CD4-positive, alpha-beta memory T cell (primary cell): ENCODE measurements at regions of chr13 and their contacts with region 1.

Region 1: DNA sequence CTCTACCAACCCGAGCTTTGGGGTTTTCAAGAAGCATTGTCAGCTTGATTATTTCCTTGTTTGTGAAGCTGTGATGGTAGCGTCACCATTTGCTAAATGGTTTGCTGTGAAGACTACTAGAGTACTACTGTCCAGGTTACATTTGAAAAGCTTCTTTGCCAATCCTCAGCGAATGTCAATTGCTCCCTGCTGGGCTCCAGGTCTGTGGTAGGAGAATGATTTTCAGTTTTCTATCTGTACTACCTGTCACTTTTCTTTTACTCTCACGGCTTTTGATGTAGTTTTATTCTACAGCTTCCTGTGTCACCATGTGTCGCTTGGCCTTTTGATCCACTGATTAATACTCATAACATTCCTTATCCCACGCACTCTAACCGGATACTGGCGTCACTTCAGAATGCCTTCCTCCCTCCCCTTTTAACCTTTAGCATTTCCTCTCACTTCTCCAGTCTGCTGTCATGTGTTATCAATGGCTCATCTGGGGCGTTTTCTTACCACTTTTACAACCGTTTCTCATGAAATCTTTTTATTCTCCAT is 7.5 kb upstream of the GPR183 start:
- DNase-seq: peak; percentile 77 to 86 (median 83)
- H3K4me3 ChIP-seq: peak overlapping the region; percentile 26 to 46
- H3K4me3 Mint-ChIP-seq: peak overlapping the region; percentile 76 to 88 (median 80)
- H3K27ac ChIP-seq: peak overlapping the region; percentile 73
- H3K27ac Mint-ChIP-seq: peak overlapping the region; percentile 88 to 99 (median 98)
- H3K4me1 ChIP-seq: peaks cover 87% of the 10 kb centered on the region
- H3K4me1 Mint-ChIP-seq: peaks cover 61 to 86% (median 74%) of the 10 kb centered on the region in 4 donors
- H3K27me3 ChIP-seq: no peaks in the 10 kb centered on the region
- H3K27me3 Mint-ChIP-seq: no peaks in the 10 kb centered on the region

Region 2: GRCh38 chr13:99133230-99133629 is 181.5 kb before region 1 on chr13:
- CTCF ChIA-PET with region 1: no interaction called
- POLR2A ChIA-PET with region 1: no interaction called
- intact Hi-C with region 1: no loop called
- DNase-seq: no peak
- H3K4me3 ChIP-seq: no peak overlapping the region
- H3K4me3 Mint-ChIP-seq: no peak overlapping the region
- H3K27ac ChIP-seq: no peak overlapping the region
- H3K27ac Mint-ChIP-seq: peak overlapping the region in 2 of 7 donors; percentile 13 to 25
- H3K4me1 ChIP-seq: no peaks in the 10 kb centered on the region
- H3K4me1 Mint-ChIP-seq: peaks cover 0 to 3% (median 0%) of the 10 kb centered on the region in 4 donors
- H3K27me3 ChIP-seq: no peaks in the 10 kb centered on the region
- H3K27me3 Mint-ChIP-seq: no peaks in the 10 kb centered on the region

Region 3: GRCh38 chr13:99288089-99288488 is 26.6 kb before region 1 on chr13:
- CTCF ChIA-PET with region 1: no interaction called
- POLR2A ChIA-PET with region 1: interaction called, 406 read pairs
- intact Hi-C with region 1: no loop called
- DNase-seq: no peak
- H3K4me3 ChIP-seq: no peak overlapping the region
- H3K4me3 Mint-ChIP-seq: peak overlapping the region; percentile 33 to 84 (median 60)
- H3K27ac ChIP-seq: peak overlapping the region; percentile 18
- H3K27ac Mint-ChIP-seq: peak overlapping the region; percentile 88 to 95 (median 89)
- H3K4me1 ChIP-seq: peaks cover 95% of the 10 kb centered on the region
- H3K4me1 Mint-ChIP-seq: peaks cover 65 to 100% (median 81%) of the 10 kb centered on the region in 4 donors
- H3K27me3 ChIP-seq: no peaks in the 10 kb centered on the region
- H3K27me3 Mint-ChIP-seq: no peaks in the 10 kb centered on the region

Region 4: GRCh38 chr13:99296398-99296797 is 18.3 kb before region 1 on chr13:
- CTCF ChIA-PET with region 1: interaction called, 6 read pairs
- POLR2A ChIA-PET with region 1: interaction called, 247 read pairs
- intact Hi-C with region 1: loop called (anchors 2 kb)
- DNase-seq: peak; percentile 46 to 69 (median 59)
- H3K4me3 ChIP-seq: peak overlapping the region in 1 of 2 donors; percentile 8
- H3K4me3 Mint-ChIP-seq: peak overlapping the region; percentile 76 to 87 (median 86)
- H3K27ac ChIP-seq: peak overlapping the region; percentile 66
- H3K27ac Mint-ChIP-seq: peak overlapping the region; percentile 86 to 96 (median 94)
- H3K4me1 ChIP-seq: peaks cover 94% of the 10 kb centered on the region
- H3K4me1 Mint-ChIP-seq: peaks cover 58 to 92% (median 70%) of the 10 kb centered on the region in 4 donors
- H3K27me3 ChIP-seq: no peaks in the 10 kb centered on the region
- H3K27me3 Mint-ChIP-seq: no peaks in the 10 kb centered on the region

Region 5: GRCh38 chr13:99301913-99302636 is 12.6 kb before region 1 on chr13:
- CTCF ChIA-PET with region 1: interaction called, 6 read pairs
- POLR2A ChIA-PET with region 1: interaction called, 247 read pairs
- intact Hi-C with region 1: loop called (anchors 1 kb)
- DNase-seq: no peak
- H3K4me3 ChIP-seq: peak overlapping the region; percentile 78 to 80
- H3K4me3 Mint-ChIP-seq: peak overlapping the region; percentile 88 to 100 (median 99)
- H3K27ac ChIP-seq: peak overlapping the region; percentile 77
- H3K27ac Mint-ChIP-seq: peak overlapping the region; percentile 88 to 99 (median 96)
- H3K4me1 ChIP-seq: peaks cover 74% of the 10 kb centered on the region
- H3K4me1 Mint-ChIP-seq: peaks cover 45 to 77% (median 55%) of the 10 kb centered on the region in 4 donors
- H3K27me3 ChIP-seq: no peaks in the 10 kb centered on the region
- H3K27me3 Mint-ChIP-seq: no peaks in the 10 kb centered on the region

Region 6: GRCh38 chr13:99347911-99348451 is 33.3 kb after region 1 on chr13:
- CTCF ChIA-PET with region 1: interaction called, 10 read pairs
- POLR2A ChIA-PET with region 1: interaction called, 929 read pairs
- intact Hi-C with region 1: no loop called
- DNase-seq: no peak
- H3K4me3 ChIP-seq: no peak overlapping the region
- H3K4me3 Mint-ChIP-seq: peak overlapping the region in 5 of 8 donors; percentile 30 to 66 (median 56)
- H3K27ac ChIP-seq: peak overlapping the region; percentile 9
- H3K27ac Mint-ChIP-seq: peak overlapping the region; percentile 79 to 99 (median 94)
- H3K4me1 ChIP-seq: peaks cover 84% of the 10 kb centered on the region
- H3K4me1 Mint-ChIP-seq: peaks cover 79 to 98% (median 88%) of the 10 kb centered on the region in 4 donors
- H3K27me3 ChIP-seq: no peaks in the 10 kb centered on the region
- H3K27me3 Mint-ChIP-seq: no peaks in the 10 kb centered on the region

Region 7: GRCh38 chr13:99366075-99366987 is 51.6 kb after region 1 on chr13:
- CTCF ChIA-PET with region 1: interaction called, 6 read pairs
- POLR2A ChIA-PET with region 1: interaction called, 417 read pairs
- intact Hi-C with region 1: no loop called
- DNase-seq: no peak
- H3K4me3 ChIP-seq: peak overlapping the region in 1 of 2 donors; percentile 22
- H3K4me3 Mint-ChIP-seq: peak overlapping the region; percentile 41 to 93 (median 78)
- H3K27ac ChIP-seq: peak overlapping the region; percentile 70
- H3K27ac Mint-ChIP-seq: peak overlapping the region; percentile 96 to 98 (median 97)
- H3K4me1 ChIP-seq: peaks cover 98% of the 10 kb centered on the region
- H3K4me1 Mint-ChIP-seq: peaks cover 73 to 98% (median 85%) of the 10 kb centered on the region in 4 donors
- H3K27me3 ChIP-seq: no peaks in the 10 kb centered on the region
- H3K27me3 Mint-ChIP-seq: no peaks in the 10 kb centered on the region

Region 8: DNA sequence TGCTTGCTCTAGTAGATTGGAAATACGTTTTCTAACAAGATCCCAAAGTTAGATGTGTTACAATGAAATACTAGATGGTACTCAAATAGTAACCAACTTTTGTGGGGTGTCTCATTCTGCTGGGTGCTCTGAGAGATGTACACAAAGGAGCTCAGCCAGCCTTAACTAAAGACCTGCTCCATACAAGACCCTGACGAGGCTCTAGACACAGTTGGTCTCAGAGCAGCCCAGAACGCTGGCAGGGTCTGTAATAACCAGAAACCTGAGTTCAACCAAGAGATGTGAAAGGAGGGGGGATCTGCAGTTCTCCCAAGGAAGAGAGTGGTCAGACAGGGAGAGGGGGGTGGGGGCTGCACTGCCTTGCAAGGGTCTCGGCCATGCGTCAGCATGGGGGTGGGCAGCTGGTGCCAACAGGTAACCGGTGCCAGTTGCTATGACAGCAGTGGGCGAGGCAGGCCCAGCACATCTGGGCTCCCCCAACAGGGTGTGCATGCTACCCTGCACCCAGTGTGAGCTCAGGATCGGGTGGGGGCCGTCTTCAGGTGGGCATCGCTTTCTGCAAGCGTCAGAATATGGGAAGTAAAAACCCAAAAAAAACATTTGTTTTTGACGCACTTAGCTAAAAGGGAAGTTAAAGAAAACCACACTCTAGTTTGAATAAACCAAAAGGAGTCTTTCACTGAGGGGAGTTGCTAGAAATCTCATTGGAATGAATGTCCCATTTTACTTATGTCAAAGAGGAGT is 60.5 kb after region 1 on chr13:
- CTCF ChIA-PET with region 1: interaction called, 142 read pairs
- POLR2A ChIA-PET with region 1: interaction called, 361 read pairs
- intact Hi-C with region 1: no loop called
- DNase-seq: peak; percentile 73 to 89 (median 82)
- H3K4me3 ChIP-seq: peak overlapping the region in 1 of 2 donors; percentile 15
- H3K4me3 Mint-ChIP-seq: peak overlapping the region; percentile 61 to 77 (median 68)
- H3K27ac ChIP-seq: peak overlapping the region; percentile 39
- H3K27ac Mint-ChIP-seq: peak overlapping the region; percentile 96 to 100 (median 98)
- H3K4me1 ChIP-seq: peaks cover 85% of the 10 kb centered on the region
- H3K4me1 Mint-ChIP-seq: peaks cover 58 to 95% (median 79%) of the 10 kb centered on the region in 4 donors
- H3K27me3 ChIP-seq: no peaks in the 10 kb centered on the region
- H3K27me3 Mint-ChIP-seq: no peaks in the 10 kb centered on the region

Region 9: DNA sequence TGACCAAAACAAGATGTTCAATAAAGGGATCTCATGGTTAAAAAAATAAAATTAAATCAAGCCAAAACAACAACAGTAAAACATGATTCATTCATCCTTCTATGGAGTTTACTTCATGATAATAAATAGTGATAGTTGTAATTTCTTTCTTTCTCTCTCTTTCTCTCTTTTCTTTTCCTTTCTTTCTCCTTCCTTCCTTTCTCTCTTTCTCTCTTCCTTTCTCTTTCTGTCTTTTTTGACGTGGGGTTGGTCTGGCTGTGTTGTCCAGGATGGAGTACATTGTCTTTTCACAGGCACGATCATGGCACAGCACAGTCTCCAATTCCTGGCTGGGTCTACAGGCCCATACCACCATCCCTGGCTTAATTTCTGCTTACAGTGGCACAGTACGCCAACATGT is 745.1 kb after region 1 on chr13:
- CTCF ChIA-PET with region 1: no interaction called
- POLR2A ChIA-PET with region 1: no interaction called
- intact Hi-C with region 1: no loop called
- DNase-seq: no peak
- H3K4me3 ChIP-seq: no peak overlapping the region
- H3K4me3 Mint-ChIP-seq: no peak overlapping the region
- H3K27ac ChIP-seq: no peak overlapping the region
- H3K27ac Mint-ChIP-seq: peak overlapping the region in 5 of 7 donors; percentile 19 to 97 (median 70)
- H3K4me1 ChIP-seq: no peaks in the 10 kb centered on the region
- H3K4me1 Mint-ChIP-seq: peaks cover 0 to 3% (median 0%) of the 10 kb centered on the region in 4 donors
- H3K27me3 ChIP-seq: peaks cover 9% of the 10 kb centered on the region
- H3K27me3 Mint-ChIP-seq: peaks cover 8% of the 10 kb centered on the region in 2 donors